ENCODE measurements at regions of chr10 and their contacts with region 1.

Region 1: DNA sequence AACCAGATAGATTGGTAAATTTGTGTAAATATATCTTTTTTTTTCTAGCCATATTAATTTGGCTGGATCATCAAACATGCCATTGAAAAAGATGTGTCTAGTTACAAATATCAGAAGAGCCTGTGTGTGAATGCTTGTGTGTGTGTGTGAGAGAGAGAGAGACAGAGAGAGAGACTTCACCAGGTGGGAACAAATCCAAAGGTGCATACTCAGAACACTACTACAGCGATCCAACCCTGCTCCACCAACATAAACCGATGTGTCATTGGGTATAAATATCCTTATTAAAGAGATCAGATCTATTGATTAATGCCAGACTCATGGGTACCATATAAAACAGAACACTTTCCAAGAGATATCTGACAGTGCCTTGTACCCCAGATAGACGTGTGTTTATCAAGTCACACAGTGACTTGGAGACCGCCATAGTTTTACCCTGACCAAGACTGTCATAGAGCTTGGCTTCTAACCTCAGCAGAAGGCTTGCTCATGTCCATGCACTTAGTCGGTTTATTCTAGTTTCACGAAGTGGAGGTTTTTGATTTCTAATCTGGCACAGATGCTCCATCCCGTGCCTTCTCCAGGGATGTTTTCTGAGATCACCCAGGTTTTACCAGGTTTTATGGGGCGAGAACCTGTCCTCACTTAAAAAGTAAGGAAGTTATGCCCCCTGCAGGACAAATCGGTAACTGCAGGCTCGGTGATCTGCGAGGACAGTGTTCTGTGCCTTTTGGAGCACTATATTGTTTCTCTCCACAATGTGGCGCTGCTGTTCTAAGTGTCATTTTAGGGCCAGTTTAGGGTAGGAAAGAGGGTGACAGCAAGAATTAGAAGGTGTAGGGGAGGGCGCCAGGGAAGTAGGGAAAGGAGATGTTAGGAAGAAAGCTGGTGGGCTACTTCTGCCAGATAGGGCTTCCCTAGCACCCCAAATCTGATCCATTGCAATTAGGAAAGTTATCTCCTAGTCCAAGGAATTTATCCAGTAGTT is 29.3 kb upstream of the WNT8B start:
- DNase-seq: peak; percentile 90
- H3K4me3 Mint-ChIP-seq: no peak overlapping the region
- H3K27ac Mint-ChIP-seq: no peak overlapping the region
- H3K4me1 Mint-ChIP-seq: peaks cover 16% of the 10 kb centered on the region
- H3K27me3 Mint-ChIP-seq: no peaks in the 10 kb centered on the region

Region 2: GRCh38 chr10:100338434-100339036 is 95.0 kb before region 1 on chr10:
- intact Hi-C with region 1: loop called (anchors 1 kb)
- DNase-seq: peak; percentile 71
- H3K4me3 Mint-ChIP-seq: no peak overlapping the region
- H3K27ac Mint-ChIP-seq: no peak overlapping the region
- H3K4me1 Mint-ChIP-seq: peaks cover 17% of the 10 kb centered on the region
- H3K27me3 Mint-ChIP-seq: peaks cover 9% of the 10 kb centered on the region

Region 3: DNA sequence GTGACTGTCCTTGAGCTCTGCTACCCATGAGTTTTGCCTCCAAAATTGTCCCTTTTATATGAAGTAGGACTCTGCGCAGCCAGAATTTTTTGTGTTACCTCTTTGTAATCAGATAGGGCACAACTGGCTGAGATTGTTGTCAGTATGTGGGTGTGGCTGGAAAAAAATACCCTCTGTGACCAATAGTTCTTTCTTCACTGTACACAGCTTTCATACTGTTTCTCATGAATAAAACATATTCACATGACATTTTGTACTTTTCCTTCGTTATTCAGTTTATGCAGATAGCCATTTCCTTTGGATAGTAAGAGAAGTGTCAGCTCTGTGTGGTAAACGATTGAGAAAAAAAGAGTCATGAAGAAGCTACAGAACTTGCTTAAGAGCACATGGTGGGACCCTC is 20.4 kb before region 1 on chr10:
- intact Hi-C with region 1: no loop called
- DNase-seq: no peak
- H3K4me3 Mint-ChIP-seq: no peak overlapping the region
- H3K27ac Mint-ChIP-seq: no peak overlapping the region
- H3K4me1 Mint-ChIP-seq: peaks cover 1% of the 10 kb centered on the region
- H3K27me3 Mint-ChIP-seq: peaks cover 11% of the 10 kb centered on the region

Region 4: DNA sequence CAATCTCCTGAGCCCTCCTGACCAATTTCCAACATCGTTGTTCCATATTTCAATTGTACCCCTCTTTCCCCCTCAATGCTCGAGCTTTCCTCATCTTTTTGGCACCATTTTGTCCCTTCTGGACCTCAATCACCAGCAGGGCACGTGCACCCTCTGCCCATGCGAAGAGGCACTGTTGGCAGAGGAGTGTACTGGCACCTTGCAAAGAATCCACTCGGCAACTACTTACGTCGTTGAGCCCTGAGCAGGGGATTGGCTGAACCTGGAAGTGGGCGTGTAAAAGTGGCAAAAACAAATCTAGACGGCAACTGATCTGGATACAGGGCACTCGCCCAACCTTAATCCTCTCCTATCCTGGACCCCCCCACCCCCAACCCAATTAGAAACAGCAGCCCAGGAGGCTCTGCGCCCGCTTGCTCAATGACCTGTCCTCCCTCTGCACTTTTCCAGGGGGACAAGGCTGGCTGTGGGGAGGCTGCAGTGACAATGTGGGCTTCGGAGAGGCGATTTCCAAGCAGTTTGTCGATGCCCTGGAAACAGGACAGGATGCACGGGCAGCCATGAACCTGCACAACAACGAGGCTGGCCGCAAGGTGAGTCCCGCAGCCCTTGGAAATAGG is 48.0 kb after region 1 on chr10:
- intact Hi-C with region 1: no loop called
- DNase-seq: peak; percentile 88
- H3K4me3 Mint-ChIP-seq: peak overlapping the region; percentile 78
- H3K27ac Mint-ChIP-seq: no peak overlapping the region
- H3K4me1 Mint-ChIP-seq: peaks cover 26% of the 10 kb centered on the region
- H3K27me3 Mint-ChIP-seq: peaks cover 9% of the 10 kb centered on the region